GM23248 (cell line): ENCODE measurements at regions of chr9 and their contacts with region 1.

Region 1: GRCh38 chr9:130331573-130331972 is 66.0 kb downstream of the HMCN2 start:
- DNase-seq: peak; percentile 92
- H3K4me3 ChIP-seq: no peak overlapping the region
- H3K27ac ChIP-seq: no peak overlapping the region
- H3K4me1 ChIP-seq: peaks cover 11% of the 10 kb centered on the region
- H3K27me3 ChIP-seq: peaks cover 13% of the 10 kb centered on the region

Region 2: GRCh38 chr9:130118841-130119518 is 212.6 kb before region 1 on chr9:
- in situ Hi-C with region 1: loop called (anchors 10 kb)
- DNase-seq: peak; percentile 66
- H3K4me3 ChIP-seq: no peak overlapping the region
- H3K27ac ChIP-seq: peak overlapping the region; percentile 89
- H3K4me1 ChIP-seq: peaks cover 24% of the 10 kb centered on the region
- H3K27me3 ChIP-seq: no peaks in the 10 kb centered on the region